ENCODE measurements at regions of chr16 and their contacts with region 1.

Region 1: DNA sequence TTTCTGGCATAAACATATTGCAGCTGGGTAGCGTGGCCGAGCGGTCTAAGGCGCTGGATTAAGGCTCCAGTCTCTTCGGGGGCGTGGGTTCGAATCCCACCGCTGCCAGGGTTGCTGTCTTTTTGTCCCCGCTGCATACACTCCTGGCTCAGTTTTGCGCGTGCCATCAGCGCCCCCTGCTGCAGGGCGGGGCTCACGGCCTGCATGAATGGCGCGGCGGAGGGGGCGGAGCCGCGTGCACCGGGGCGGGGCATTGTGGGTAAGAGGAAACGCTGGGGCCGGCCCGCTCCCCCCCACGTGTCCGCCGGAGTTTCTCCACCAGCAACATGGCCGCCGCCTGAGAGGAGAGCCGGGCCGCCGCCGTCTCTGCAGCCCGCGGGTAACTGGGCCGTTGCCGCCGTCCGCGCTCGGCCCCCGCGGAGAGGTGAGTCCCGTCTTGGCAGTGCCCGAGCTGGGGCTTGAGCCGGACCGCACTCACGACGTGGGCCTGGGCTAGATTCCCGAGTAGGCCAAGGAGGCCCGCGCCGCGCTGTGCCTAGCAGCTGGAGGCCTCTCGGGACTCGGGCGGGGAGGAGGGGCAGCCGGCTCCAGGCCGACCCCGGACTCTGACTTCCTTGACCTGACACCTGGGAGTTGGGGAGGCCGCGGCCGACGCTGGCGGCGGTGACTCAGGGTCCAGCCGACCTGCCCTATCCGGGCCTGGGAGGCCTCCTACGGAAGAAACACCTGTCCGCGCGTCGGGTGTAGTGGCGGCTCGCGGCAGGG is at the start of gene POLR3E:
- DNase-seq: peak; percentile 99 to 100 (median 100)
- ATAC-seq: peak; percentile 97
- H3K4me3 ChIP-seq: peak within 1 kb of the TSS; percentile 56
- H3K4me1 ChIP-seq: no peaks in the 10 kb centered on the region
- CTCF ChIP-seq: peak; percentile 98
- total RNA-seq, gene POLR3E: 37.7 to 54.5 (median 49.5) TPM

Region 2: DNA sequence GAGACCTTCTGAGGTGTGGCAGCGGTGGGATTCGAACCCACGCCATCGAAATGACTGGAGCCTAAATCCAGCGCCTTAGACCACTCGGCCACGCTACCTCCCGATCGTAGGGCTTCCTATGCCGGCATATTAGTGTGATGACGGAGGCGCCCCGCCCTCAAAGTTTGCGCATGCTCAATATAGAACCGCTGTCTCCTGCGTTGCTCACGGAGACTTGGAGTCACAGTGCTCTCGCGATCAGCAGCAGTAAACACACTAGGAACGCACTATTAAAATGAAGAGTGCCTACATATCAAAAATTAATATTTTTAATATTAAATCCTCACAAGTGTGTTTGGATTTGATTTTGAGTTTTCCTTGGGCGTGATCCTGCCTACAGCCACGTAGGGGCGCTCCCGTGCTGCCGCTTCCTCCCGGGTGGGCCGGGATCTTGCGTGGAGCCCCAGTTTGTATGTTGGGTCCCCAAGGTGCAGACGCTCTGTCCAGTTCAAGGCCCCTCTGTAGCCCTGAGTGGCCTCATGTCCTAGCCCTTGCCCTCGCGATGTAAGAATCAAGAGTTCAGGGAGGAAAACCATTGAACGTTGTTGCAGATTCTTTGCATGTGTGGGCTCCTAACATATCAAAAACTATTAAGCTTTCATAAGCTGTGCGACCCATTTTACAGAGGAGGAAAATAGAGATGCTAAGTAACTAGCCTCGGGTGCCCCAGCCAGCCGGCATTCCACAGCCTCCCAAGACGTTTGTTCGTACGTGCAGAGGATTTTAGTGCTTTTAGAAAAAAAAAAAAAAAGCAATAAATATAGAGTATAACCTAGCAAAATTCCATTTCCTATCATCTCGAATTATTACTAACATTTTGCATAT is 101.4 kb before region 1 on chr16:
- intact Hi-C with region 1: loop called (anchors 5 kb)
- DNase-seq: peak; percentile 90 to 96 (median 95)
- ATAC-seq: peak; percentile 37
- H3K4me3 ChIP-seq: peak overlapping the region; percentile 18
- H3K4me1 ChIP-seq: peaks cover 11% of the 10 kb centered on the region
- CTCF ChIP-seq: peak; percentile 76

Region 3: GRCh38 chr16:22240023-22240710 is 57.1 kb before region 1 on chr16:
- intact Hi-C with region 1: no loop called
- DNase-seq: no peak
- ATAC-seq: no peak
- H3K4me3 ChIP-seq: no peak overlapping the region
- H3K4me1 ChIP-seq: peaks cover 29% of the 10 kb centered on the region
- CTCF ChIP-seq: no peak

Measured in mucosa of descending colon (tissue), 3 donors.